Activated CD4-positive, alpha-beta memory T cell treated with anti-CD3 and anti-CD28 coated beads for 36 hours (primary cell): ENCODE measurements at regions of chr10 and their contacts with region 1.

Region 1: GRCh38 chr10:60237977-60238758 is 151.5 kb downstream of the ANK3 start:
- DNase-seq: peak; percentile 26
- H3K4me3 Mint-ChIP-seq: no peak overlapping the region
- H3K27ac Mint-ChIP-seq: peak overlapping the region; percentile 50
- H3K4me1 Mint-ChIP-seq: peaks cover 31% of the 10 kb centered on the region
- H3K27me3 Mint-ChIP-seq: no peaks in the 10 kb centered on the region

Region 2: DNA sequence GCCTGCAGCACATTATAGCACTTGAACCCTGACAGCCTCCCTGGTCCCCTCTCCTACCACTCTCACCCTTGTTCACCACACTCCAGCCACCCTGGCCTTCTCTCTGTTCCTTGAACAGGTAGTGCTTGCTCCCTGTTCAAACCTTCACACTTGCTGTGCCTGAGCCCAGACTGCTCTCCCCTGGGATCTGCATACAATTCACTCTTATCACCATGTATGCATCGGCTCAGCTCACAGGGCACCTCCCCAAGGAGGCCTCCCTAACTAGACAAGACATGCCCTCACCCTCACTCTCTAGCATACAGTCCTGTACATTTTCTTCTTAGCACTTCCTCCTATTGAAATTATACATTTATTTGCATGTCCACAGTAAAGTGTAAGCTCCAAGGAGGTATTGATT is 935.1 kb before region 1 on chr10:
- CTCF ChIA-PET with region 1: no interaction called
- POLR2A ChIA-PET with region 1: no interaction called
- intact Hi-C with region 1: no loop called
- DNase-seq: no peak
- H3K4me3 Mint-ChIP-seq: no peak overlapping the region
- H3K27ac Mint-ChIP-seq: no peak overlapping the region
- H3K4me1 Mint-ChIP-seq: no peaks in the 10 kb centered on the region
- H3K27me3 Mint-ChIP-seq: no peaks in the 10 kb centered on the region

Region 3: DNA sequence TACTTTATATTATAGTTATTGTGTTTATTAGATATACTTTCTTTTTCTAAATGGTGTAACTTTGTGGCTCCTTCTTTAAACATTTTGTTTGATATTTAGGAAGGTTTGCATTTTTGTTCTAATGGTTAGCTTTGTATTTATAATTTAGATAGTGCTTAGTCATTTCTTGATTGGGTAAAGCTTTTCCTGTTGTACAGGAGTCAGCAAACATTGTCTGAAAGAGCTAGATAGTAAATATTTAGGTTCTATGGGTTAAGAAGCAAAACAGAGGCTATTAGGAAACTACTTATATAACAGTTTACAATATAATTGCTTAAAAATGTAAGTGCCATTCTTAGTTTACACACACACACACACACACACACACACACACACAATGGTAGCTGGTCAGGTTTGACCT is 261.3 kb before region 1 on chr10:
- CTCF ChIA-PET with region 1: no interaction called
- POLR2A ChIA-PET with region 1: no interaction called
- intact Hi-C with region 1: no loop called
- DNase-seq: no peak
- H3K4me3 Mint-ChIP-seq: no peak overlapping the region
- H3K27ac Mint-ChIP-seq: no peak overlapping the region
- H3K4me1 Mint-ChIP-seq: no peaks in the 10 kb centered on the region
- H3K27me3 Mint-ChIP-seq: peaks cover 3% of the 10 kb centered on the region

Region 4: DNA sequence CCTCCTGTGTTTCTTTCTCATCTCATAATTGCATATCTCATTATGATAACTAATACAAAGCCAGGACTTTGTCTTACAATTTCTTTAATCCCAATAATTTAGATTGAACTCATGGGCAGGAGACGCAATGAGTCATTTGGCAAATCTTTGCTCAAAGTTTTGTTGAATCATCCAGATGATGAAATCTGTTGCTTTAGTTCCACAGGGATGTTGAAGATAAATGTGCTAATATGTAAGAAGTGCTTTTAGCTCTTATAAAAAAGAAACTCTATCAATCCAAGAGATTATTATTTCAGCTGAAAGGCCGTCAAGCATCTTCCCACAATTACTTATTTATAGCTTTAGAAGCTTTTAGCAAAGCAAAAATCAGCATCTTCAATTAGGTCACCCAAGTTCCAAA is 188.2 kb after region 1 on chr10:
- CTCF ChIA-PET with region 1: interaction called, 4 read pairs
- POLR2A ChIA-PET with region 1: no interaction called
- intact Hi-C with region 1: loop called (anchors 2 kb)
- DNase-seq: no peak
- H3K4me3 Mint-ChIP-seq: no peak overlapping the region
- H3K27ac Mint-ChIP-seq: no peak overlapping the region
- H3K4me1 Mint-ChIP-seq: peaks cover 16% of the 10 kb centered on the region
- H3K27me3 Mint-ChIP-seq: no peaks in the 10 kb centered on the region